ENCODE measurements at regions of chr10 and their contacts with region 1.

Region 1: DNA sequence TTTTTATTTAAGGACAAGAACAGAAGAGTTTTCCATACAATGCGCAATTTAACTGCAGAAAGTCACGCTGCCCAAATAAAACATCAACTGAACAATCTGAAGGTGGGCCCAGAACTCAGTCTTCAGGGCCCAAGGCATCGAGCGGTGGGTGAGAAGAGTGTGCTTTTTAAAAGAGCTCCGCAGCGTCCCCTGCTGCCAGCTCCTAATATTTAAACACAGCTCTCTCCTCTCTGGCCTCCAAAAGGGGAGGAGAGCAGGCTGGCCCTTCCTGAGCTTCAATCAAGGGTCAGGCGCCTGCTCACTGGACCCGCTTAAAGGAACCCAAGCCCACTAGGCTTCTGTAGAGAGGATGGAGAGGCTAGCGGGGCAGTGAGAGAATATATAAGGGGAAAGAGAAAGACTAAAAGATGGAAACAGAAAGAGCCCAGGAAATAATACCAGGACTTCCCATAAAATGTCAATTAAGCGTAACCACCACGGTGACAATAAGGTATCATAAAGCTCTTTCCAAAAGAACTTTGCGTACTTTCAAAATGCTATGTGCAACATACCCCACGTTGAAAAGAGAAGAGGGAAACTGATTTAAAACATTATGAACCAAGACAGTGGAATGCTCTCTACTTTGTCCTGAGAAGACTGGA is 2.8 kb downstream of the FAM53B start:
- DNase-seq: peak; percentile 88
- ATAC-seq: peak; percentile 62
- H3K4me3 Mint-ChIP-seq: peak overlapping the region; percentile 50
- H3K27ac Mint-ChIP-seq: no peak overlapping the region
- H3K4me1 Mint-ChIP-seq: peaks cover 73% of the 10 kb centered on the region
- H3K27me3 Mint-ChIP-seq: peaks cover 19% of the 10 kb centered on the region
- CTCF ChIP-seq: peak; percentile 79

Region 2: DNA sequence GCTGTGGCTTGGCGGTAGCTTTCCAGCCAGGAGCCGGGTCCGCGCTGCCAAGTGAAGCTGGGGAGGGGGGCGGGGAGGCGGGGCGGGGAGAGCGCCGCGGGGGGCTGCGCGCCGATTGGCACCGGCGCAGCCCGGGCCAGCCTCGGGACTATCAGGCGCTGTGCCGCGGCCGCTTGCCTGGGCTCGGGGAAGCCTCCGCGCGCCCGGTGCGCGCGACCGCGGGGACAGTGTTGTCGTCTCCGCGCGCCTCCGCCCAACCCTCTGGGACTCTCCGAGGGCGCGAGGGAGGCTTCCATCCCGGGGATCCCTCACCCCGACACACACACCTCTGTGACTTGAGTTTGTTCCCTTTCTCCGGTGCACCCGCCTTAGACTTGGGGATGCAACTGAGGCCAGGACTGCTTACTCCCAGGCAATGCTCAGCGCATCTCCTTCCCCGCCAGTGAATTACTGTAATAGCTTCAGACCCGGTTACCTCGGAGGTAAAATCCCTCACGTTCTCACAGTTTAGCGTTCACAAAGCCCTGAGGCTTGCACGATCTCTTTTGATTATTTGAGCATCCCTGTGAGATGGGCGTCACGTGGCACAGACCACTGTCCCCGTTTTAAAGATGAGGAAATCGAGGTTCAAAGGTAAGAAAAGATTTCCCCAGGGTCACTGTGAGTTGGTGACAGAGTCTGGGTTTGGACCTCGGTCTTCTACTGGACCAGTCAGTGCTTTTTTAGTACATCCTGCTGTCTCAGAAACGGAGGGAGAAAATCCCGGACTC is 291.2 kb before region 1 on chr10 and contains the start of gene NKX1-2:
- CTCF ChIA-PET with region 1: no interaction called
- POLR2A ChIA-PET with region 1: no interaction called
- DNase-seq: peak; percentile 81
- ATAC-seq: peak; percentile 40
- H3K4me3 Mint-ChIP-seq: peak within 1 kb of the TSS; percentile 80
- H3K27ac Mint-ChIP-seq: peak within 1 kb of the TSS; percentile 89
- H3K4me1 Mint-ChIP-seq: peaks cover 60% of the 10 kb centered on the region
- H3K27me3 Mint-ChIP-seq: peaks cover 58% of the 10 kb centered on the region
- CTCF ChIP-seq: no peak
- total RNA-seq, gene NKX1-2: 30.8 to 57.7 TPM (median 31.0 TPM) in 3 replicates

Region 3: DNA sequence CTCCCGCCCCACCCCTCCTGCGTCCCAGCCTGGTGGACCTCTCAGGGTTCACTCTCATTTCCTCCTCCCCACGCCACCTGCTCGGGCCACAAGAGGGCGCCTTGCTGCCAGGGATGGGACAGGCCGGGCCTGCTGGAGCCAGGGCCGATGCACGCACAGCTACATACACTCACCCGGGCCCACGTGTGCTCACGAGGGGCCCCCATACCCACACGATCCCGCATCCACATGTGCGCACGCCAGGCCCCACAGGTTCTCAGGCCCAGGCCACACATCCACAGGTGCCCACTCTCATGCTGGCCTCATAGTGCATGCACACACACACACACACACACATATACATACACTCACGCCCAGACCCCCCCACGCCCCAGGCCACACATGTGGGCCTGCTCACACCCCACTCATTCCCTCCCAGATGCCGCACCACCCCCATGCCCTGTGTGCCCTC is 211.2 kb before region 1 on chr10:
- CTCF ChIA-PET with region 1: interaction called, 46 read pairs
- POLR2A ChIA-PET with region 1: no interaction called
- DNase-seq: peak; percentile 92
- ATAC-seq: peak; percentile 81
- H3K4me3 Mint-ChIP-seq: no peak overlapping the region
- H3K27ac Mint-ChIP-seq: no peak overlapping the region
- H3K4me1 Mint-ChIP-seq: peaks cover 32% of the 10 kb centered on the region
- H3K27me3 Mint-ChIP-seq: no peaks in the 10 kb centered on the region; the same call in 1 of the 2 replicates
- CTCF ChIP-seq: peak; percentile 83

Region 4: GRCh38 chr10:124604214-124605000 is 137.0 kb before region 1 on chr10:
- CTCF ChIA-PET with region 1: interaction called, 12 read pairs
- POLR2A ChIA-PET with region 1: no interaction called
- DNase-seq: no peak
- ATAC-seq: no peak
- H3K4me3 Mint-ChIP-seq: no peak overlapping the region
- H3K27ac Mint-ChIP-seq: no peak overlapping the region
- H3K4me1 Mint-ChIP-seq: no peaks in the 10 kb centered on the region
- H3K27me3 Mint-ChIP-seq: no peaks in the 10 kb centered on the region
- CTCF ChIP-seq: no peak

Region 5: DNA sequence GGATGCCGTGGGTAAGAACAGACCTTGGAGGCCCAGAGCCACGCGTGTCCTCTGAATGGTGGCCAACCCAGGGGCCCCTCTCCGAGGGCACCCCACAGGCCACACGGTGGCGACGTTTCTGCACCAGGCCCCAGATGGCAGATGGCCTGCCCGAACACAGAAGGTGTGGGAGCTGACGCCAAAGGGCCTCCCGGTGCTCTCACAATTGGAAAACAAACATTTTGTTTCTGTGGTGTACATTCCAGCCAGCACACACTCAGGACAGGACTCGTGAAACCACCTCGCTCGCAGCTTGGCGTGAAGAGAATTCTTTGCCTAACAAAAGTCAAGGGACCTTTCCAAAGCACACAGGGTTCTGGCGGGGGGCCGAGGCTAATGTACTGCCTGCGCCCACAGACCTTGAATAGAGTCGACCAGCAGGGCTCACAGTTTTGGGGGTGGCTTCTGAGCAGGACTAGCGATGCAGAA is 109.3 kb before region 1 on chr10:
- CTCF ChIA-PET with region 1: interaction called, 32 read pairs
- POLR2A ChIA-PET with region 1: no interaction called
- DNase-seq: peak; percentile 48
- ATAC-seq: peak; percentile 18; the same call in 1 of the 2 replicates
- H3K4me3 Mint-ChIP-seq: no peak overlapping the region
- H3K27ac Mint-ChIP-seq: no peak overlapping the region
- H3K4me1 Mint-ChIP-seq: peaks cover 22% of the 10 kb centered on the region
- H3K27me3 Mint-ChIP-seq: no peaks in the 10 kb centered on the region
- CTCF ChIP-seq: no peak

Region 6: GRCh38 chr10:124705817-124706461 is 35.5 kb before region 1 on chr10:
- CTCF ChIA-PET with region 1: interaction called, 29 read pairs
- POLR2A ChIA-PET with region 1: interaction called, 3 read pairs
- DNase-seq: no peak
- ATAC-seq: no peak
- H3K4me3 Mint-ChIP-seq: no peak overlapping the region
- H3K27ac Mint-ChIP-seq: peak overlapping the region; percentile 70; the same call in 1 of the 2 replicates
- H3K4me1 Mint-ChIP-seq: peaks cover 52% of the 10 kb centered on the region
- H3K27me3 Mint-ChIP-seq: no peaks in the 10 kb centered on the region
- CTCF ChIP-seq: no peak

Region 7: DNA sequence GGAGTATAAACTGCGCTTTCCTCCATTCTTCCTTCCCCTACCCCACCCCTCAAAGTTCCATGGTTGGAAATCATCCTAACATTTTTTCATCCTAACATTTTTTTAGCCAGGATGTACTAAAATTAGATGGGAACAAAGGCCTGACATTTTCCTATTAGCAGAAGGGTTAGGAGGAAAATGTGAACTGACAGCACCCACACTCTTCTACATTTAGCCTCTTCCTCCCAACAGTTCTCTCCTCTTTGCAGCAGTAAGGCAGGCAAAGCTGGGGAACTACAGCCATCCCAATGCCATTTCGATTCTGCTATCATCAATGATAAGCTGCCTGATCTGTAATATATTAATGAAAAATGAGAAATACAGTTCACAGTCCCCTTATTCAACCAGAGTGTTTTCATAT is 14.2 kb after region 1 on chr10:
- CTCF ChIA-PET with region 1: interaction called, 14 read pairs
- POLR2A ChIA-PET with region 1: no interaction called
- DNase-seq: no peak
- ATAC-seq: no peak
- H3K4me3 Mint-ChIP-seq: no peak overlapping the region
- H3K27ac Mint-ChIP-seq: no peak overlapping the region
- H3K4me1 Mint-ChIP-seq: peaks cover 35% of the 10 kb centered on the region
- H3K27me3 Mint-ChIP-seq: no peaks in the 10 kb centered on the region
- CTCF ChIP-seq: no peak

Measured in WTC11 (cell line).